Left ventricle myocardium superior (tissue), 1 donor: ENCODE measurements at regions of chr3 and their contacts with region 1.

Region 1: DNA sequence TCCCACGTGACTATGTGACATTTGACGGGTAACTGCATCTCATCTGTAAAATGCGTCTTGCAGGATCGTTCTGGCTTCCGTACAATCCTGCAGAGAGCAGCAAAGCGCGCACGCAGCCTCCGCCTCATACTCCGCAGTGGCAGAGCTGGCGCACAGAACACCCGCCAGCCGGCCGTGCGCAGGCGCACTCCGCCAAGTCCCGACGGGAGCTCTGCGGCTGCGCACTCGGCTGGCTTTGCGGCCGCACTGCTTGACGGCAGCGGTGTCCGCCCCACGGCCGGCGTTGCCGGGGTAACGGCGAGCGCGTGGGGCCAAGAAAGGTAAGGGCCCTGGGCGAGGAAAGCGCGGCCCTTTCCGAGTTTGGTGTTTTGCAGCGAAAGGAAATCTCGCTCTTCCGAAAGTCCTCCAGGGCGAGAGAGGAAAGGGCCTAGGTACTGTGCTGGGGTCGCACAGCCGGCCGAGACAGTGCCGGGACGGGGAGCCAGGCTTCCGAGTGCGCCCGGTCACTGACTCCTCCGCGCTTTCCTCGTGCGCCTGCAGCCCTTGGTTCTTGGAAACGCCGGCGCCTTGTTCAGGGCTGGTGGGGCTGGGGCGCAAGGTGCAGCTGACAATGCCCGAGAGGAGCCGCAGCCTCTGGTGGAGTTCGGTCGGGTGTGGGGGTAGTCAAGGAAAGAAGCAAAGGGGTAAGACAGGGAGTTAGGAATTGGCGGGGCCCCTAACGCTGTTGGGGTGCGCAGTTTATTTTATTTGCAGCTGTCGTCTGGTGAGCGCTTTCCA is at the start of gene TSEN2:
- DNase-seq: peak; percentile 98
- ATAC-seq: peak; percentile 96
- total RNA-seq, gene TSEN2: 23.1 TPM

Region 2: DNA sequence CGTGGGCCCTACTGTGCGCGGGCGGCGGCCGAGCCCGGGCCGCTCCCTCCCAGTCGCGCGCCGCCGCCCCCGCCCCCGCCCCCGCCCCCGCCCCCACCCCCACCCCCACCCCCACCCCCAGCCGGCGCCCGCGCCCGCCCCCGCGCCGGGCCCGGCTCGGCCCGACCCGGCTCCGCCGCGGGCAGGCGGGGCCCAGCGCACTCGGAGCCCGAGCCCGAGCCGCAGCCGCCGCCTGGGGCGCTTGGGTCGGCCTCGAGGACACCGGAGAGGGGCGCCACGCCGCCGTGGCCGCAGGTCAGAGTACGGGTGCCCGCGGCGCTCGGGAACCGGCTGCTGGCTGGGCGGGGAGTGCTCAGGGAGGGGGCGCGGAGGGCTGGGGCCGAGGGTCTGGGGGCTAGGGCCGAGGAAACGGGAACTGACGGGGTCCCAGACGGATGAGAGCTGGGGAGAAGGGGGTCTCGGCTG is 196.6 kb before region 1 on chr3:
- intact Hi-C with region 1: loop called (anchors 5 kb)
- DNase-seq: peak; percentile 80
- ATAC-seq: peak; percentile 93